ENCODE measurements at regions of chr10 and their contacts with region 1.

Region 1: GRCh38 chr10:7818295-7819122 is at the start of gene TAF3:
- DNase-seq: peak; percentile 95
- CTCF ChIP-seq: no peak

Region 2: GRCh38 chr10:7792541-7792940 is 26.0 kb before region 1 on chr10:
- CTCF ChIA-PET with region 1: interaction called, 14 read pairs
- POLR2A ChIA-PET with region 1: interaction called, 3 read pairs
- DNase-seq: no peak
- CTCF ChIP-seq: no peak

Region 3: GRCh38 chr10:7797582-7797981 is 20.9 kb before region 1 on chr10:
- CTCF ChIA-PET with region 1: interaction called, 14 read pairs
- POLR2A ChIA-PET with region 1: no interaction called
- DNase-seq: no peak
- CTCF ChIP-seq: no peak

Region 4: GRCh38 chr10:7876541-7877127 is 58.1 kb after region 1 on chr10:
- CTCF ChIA-PET with region 1: no interaction called
- POLR2A ChIA-PET with region 1: no interaction called
- DNase-seq: no peak
- CTCF ChIP-seq: no peak

Region 5: GRCh38 chr10:8600192-8600591 is 781.7 kb after region 1 on chr10:
- CTCF ChIA-PET with region 1: no interaction called
- POLR2A ChIA-PET with region 1: no interaction called
- DNase-seq: no peak
- CTCF ChIP-seq: no peak

Measured in GM10248 (cell line).